ENCODE measurements at regions of chr16 and their contacts with region 1.

Region 1: GRCh38 chr16:15996432-15997109 is 47.2 kb downstream of the ABCC1 start:
- DNase-seq: peak; percentile 28 to 31
- ATAC-seq: peak in 5 of 8 donors; percentile 19 to 59 (median 37)
- H3K4me3 ChIP-seq: no peak overlapping the region
- H3K27ac ChIP-seq: peak overlapping the region in 6 of 10 donors; percentile 17 to 77 (median 70)
- H3K4me1 ChIP-seq: peaks cover 5 to 66% (median 53%) of the 10 kb centered on the region in 9 donors
- H3K27me3 ChIP-seq: no peaks in the 10 kb centered on the region
- CTCF ChIP-seq: peak in 1 of 9 donors; percentile 12

Region 2: GRCh38 chr16:15855704-15856003 is 140.9 kb before region 1 on chr16:
- intact Hi-C with region 1: no loop called
- DNase-seq: no peak
- ATAC-seq: no peak
- H3K4me3 ChIP-seq: peak overlapping the region in 5 of 10 donors; percentile 1 to 53 (median 52)
- H3K27ac ChIP-seq: peak overlapping the region in 2 of 10 donors; percentile 5 to 40
- H3K4me1 ChIP-seq: peaks cover 0 to 20% (median 14%) of the 10 kb centered on the region in 9 donors
- H3K27me3 ChIP-seq: peaks cover 0 to 48% (median 28%) of the 10 kb centered on the region in 7 donors
- CTCF ChIP-seq: no peak

Region 3: DNA sequence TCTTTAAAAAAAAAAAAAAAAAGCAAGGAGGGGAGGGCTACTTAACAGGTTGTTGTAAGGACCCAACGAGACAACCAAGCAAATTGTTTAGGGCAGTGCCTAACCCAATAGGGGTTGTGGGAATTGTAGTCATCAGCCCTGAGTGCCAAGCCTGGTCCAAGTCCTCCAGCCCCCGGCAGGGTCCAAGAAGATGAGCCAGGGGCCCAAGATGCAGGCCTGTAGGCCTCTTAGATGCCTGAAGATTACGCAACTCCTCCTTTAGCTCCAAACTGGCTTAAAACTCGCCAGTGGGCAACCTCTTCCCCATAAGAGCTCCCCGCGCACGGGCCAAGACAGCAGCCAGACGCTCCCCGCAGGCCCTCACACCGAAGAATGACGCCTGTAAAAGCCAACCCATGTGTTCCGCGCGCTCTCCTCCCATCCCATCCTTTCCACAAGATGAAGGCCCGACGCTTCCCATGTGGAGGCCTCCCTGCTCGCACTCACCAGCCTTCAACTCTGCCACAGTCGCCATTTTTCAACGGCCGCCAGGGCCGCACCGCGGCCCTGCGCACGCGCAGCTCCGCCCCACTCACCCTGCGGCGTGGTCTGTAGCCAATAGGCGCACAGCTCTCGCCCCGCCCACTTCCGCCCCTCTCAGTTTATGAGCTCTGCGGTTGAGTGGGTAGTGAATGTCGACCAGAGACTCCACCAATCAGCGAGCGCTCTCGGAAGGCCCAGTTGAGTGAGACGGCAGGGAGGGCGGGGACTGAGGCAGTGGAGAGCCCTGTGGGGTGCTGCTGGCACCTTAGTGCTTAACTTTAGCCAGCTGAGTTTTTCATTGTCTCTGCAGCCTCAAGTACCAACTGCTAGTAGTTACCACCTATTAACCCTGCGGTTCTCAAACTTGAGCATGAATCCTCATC is 108.2 kb before region 1 on chr16 and contains the start of gene CEP20:
- intact Hi-C with region 1: loop called in 1 of 10 experiments (anchors 10 kb)
- DNase-seq: peak; percentile 99 to 100
- ATAC-seq: peak; percentile 100
- H3K4me3 ChIP-seq: peak within 1 kb of the TSS; percentile 62 to 99 (median 78)
- H3K27ac ChIP-seq: peak within 1 kb of the TSS; percentile 31 to 95 (median 88)
- H3K4me1 ChIP-seq: peaks cover 0 to 33% (median 28%) of the 10 kb centered on the region in 9 donors
- H3K27me3 ChIP-seq: no peaks in the 10 kb centered on the region
- CTCF ChIP-seq: peak in 5 of 9 donors; percentile 22 to 38 (median 31)
- total RNA-seq, gene CEP20: 24.1 to 42.6 (median 32.5) TPM

Region 4: GRCh38 chr16:16150117-16150877 is 153.7 kb after region 1 on chr16:
- intact Hi-C with region 1: no loop called
- DNase-seq: peak; percentile 67 to 75
- ATAC-seq: peak; percentile 80 to 94 (median 88)
- H3K4me3 ChIP-seq: peak overlapping the region in 2 of 10 donors; percentile 2 to 14
- H3K27ac ChIP-seq: peak overlapping the region in 8 of 10 donors; percentile 15 to 71 (median 58)
- H3K4me1 ChIP-seq: peaks cover 0 to 16% (median 10%) of the 10 kb centered on the region in 9 donors
- H3K27me3 ChIP-seq: no peaks in the 10 kb centered on the region
- CTCF ChIP-seq: no peak